Transverse colon (tissue), 4 donors: ENCODE measurements at regions of chr6 and their contacts with region 1.

Region 1: GRCh38 chr6:96304997-96305396 is 216.6 kb upstream of the UFL1 start:
- DNase-seq: no peak
- H3K4me3 ChIP-seq: no peak overlapping the region
- H3K27ac ChIP-seq: no peak overlapping the region
- H3K4me1 ChIP-seq: no peaks in the 10 kb centered on the region
- H3K27me3 ChIP-seq: no peaks in the 10 kb centered on the region
- CTCF ChIP-seq: no peak
- EP300 ChIP-seq: no peak
- POLR2A ChIP-seq: no peak

Region 2: DNA sequence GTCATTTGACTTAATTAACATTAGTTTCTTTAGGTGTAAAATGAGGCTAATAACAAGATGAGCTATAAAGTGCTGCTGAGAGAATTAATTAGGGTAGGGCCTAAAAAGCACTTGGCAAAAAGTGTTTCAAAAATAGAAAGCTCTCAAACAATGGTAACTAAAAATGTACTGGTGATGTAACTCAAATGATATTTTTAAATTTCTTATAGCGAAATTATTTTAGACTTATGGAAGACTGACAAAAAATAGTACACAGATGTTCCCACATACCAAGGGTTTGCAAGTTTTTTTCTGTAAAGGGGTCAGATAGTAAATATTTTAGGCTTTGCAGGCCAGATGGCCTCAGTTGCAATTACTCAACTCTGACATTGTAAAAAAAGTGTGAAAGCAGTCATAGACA is 25.9 kb after region 1 on chr6:
- in situ Hi-C with region 1: no loop called
- intact Hi-C with region 1: loop called (anchors 1 kb)
- DNase-seq: no peak
- H3K4me3 ChIP-seq: no peak overlapping the region
- H3K27ac ChIP-seq: no peak overlapping the region
- H3K4me1 ChIP-seq: no peaks in the 10 kb centered on the region
- H3K27me3 ChIP-seq: no peaks in the 10 kb centered on the region
- CTCF ChIP-seq: no peak
- EP300 ChIP-seq: no peak
- POLR2A ChIP-seq: no peak